CD4-positive, alpha-beta memory T cell (primary cell): ENCODE measurements at regions of chr4 and their contacts with region 1.

Region 1: DNA sequence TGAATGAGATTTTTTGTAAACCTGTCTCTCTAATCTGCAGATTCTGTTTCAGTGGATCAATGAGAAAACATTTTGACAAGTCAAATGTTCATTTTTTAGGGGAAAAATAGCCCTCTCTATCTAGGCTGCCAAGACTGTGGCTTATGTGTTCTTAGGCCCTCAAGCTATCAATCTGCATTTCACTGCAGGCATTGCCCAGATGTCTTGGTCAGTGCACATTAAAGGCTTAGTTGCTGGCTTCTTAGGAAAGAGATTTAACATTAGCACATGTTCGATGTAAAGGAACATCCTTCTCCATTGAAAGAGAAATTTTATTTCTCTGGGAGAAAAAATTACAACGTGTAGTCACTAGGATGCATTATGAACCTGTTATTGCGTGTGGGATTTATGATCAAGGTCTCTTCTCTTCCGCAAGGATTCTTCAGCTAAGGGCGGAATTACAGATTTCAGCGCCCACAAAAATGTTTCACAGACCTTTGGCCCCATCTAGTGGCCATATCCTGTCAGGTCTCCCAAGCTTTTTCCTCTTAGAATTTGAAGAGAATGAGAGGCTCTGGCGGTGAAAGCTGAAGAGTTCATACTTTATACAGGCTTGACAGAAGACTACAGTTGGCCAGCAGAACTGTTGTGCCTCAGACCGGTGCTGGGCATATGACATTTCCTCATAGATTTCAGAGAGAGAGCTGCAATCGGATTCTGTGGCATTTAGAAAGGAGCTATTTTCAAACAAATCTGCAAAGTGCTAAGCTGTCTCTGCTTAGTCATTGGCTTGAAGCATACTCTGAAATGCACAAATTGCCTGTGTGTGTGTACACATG is 144.6 kb upstream of the NOCT start:
- DNase-seq: peak in 4 of 5 donors; percentile 20 to 27 (median 25)
- H3K4me3 ChIP-seq: no peak overlapping the region
- H3K4me3 Mint-ChIP-seq: no peak overlapping the region
- H3K27ac ChIP-seq: no peak overlapping the region
- H3K27ac Mint-ChIP-seq: no peak overlapping the region
- H3K4me1 ChIP-seq: no peaks in the 10 kb centered on the region
- H3K4me1 Mint-ChIP-seq: peaks cover 0 to 5% (median under 1%) of the 10 kb centered on the region in 4 donors
- H3K27me3 ChIP-seq: no peaks in the 10 kb centered on the region
- H3K27me3 Mint-ChIP-seq: peaks cover 5 to 16% of the 10 kb centered on the region in 2 donors

Region 2: DNA sequence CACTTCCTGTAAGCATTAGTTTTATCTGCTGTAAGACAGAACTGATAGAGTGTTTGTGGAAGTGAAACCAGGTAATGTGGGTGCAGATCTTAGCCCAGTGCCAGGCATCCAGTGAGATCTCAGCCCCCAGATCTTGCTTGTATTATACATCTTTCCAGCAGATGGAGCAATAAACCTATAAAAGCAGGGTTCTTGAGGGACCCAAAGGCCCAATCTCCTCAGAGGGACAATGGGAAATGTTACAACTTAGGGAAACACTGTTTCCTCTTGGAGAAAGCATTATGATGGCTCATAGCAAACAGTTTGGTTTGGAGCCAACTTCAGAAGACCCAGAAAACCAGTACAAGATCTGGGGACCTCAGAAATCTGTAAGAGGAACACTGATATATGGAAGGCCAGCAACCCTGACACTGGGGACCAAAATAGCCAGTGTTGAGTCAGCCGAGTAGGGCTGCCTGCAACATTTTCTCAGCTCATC is 835.1 kb before region 1 on chr4:
- CTCF ChIA-PET with region 1: no interaction called
- POLR2A ChIA-PET with region 1: no interaction called
- intact Hi-C with region 1: loop called (anchors 5 kb)
- DNase-seq: no peak
- H3K4me3 ChIP-seq: no peak overlapping the region
- H3K4me3 Mint-ChIP-seq: no peak overlapping the region
- H3K27ac ChIP-seq: no peak overlapping the region
- H3K27ac Mint-ChIP-seq: no peak overlapping the region
- H3K4me1 ChIP-seq: no peaks in the 10 kb centered on the region
- H3K4me1 Mint-ChIP-seq: no peaks in the 10 kb centered on the region
- H3K27me3 ChIP-seq: no peaks in the 10 kb centered on the region
- H3K27me3 Mint-ChIP-seq: no peaks in the 10 kb centered on the region

Region 3: DNA sequence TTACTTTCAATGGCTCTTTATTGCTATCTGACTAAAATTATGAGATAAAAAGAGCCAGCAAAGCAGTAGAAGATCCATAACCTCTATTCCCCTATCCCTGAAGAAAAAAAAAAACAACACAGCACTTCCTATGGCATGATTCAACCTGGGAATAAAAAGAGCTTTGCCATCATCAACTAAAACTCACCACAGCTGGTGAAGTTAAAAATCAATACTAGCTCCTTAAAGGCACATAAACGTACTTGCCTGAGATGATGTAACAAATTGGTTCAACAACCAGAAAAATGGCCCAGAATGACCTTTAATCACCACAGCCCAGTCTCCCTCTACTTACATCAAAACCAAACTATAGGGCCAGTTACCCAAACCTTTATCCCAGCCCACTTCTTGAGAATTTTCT is 1129.3 kb after region 1 on chr4:
- CTCF ChIA-PET with region 1: no interaction called
- POLR2A ChIA-PET with region 1: no interaction called
- intact Hi-C with region 1: no loop called
- DNase-seq: no peak
- H3K4me3 ChIP-seq: no peak overlapping the region
- H3K4me3 Mint-ChIP-seq: no peak overlapping the region
- H3K27ac ChIP-seq: no peak overlapping the region
- H3K27ac Mint-ChIP-seq: no peak overlapping the region
- H3K4me1 ChIP-seq: no peaks in the 10 kb centered on the region
- H3K4me1 Mint-ChIP-seq: no peaks in the 10 kb centered on the region
- H3K27me3 ChIP-seq: no peaks in the 10 kb centered on the region
- H3K27me3 Mint-ChIP-seq: peaks cover 8 to 10% of the 10 kb centered on the region in 2 donors